ENCODE measurements at regions of chr4 and their contacts with region 1.

Region 1: DNA sequence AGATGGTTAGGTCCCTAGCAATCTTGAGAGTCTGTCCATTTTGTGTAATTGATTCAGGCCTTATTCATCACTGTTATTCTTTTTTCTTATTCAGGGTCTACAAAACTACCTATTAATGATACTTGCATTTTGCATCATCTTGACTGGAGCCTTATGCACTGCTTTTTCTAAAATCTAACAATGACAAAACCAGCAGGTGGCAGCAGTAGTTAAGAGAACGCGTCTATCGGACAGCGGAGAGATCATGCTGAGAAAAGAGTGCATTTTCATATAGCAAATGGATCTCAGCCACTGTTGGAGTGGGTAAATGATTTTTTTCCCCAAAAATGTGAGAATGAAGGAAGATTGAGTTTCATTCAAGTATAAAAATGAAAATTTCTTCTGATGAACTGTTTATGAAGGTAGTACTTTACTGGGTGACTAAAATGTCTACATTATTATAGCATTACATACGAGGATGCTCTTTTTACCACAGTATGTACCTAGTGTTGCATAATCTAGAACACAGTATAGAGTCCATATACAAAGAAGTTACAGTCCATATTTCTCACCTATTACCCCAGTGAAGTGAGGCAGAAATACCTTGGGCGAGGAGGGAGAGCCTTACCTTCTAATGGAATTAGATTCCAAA is 43.2 kb downstream of the TMEM144 start:
- DNase-seq: peak; percentile 18
- H3K4me3 ChIP-seq: no peak overlapping the region
- H3K27ac ChIP-seq: no peak overlapping the region
- H3K27me3 ChIP-seq: no peaks in the 10 kb centered on the region
- CTCF ChIP-seq: peak; percentile 73

Region 2: GRCh38 chr4:158051401-158052235 is 201.8 kb before region 1 on chr4:
- CTCF ChIA-PET with region 1: no interaction called
- POLR2A ChIA-PET with region 1: no interaction called
- DNase-seq: peak; percentile 63
- H3K4me3 ChIP-seq: no peak overlapping the region
- H3K27ac ChIP-seq: peak overlapping the region; percentile 34
- H3K27me3 ChIP-seq: no peaks in the 10 kb centered on the region
- CTCF ChIP-seq: no peak

Region 3: DNA sequence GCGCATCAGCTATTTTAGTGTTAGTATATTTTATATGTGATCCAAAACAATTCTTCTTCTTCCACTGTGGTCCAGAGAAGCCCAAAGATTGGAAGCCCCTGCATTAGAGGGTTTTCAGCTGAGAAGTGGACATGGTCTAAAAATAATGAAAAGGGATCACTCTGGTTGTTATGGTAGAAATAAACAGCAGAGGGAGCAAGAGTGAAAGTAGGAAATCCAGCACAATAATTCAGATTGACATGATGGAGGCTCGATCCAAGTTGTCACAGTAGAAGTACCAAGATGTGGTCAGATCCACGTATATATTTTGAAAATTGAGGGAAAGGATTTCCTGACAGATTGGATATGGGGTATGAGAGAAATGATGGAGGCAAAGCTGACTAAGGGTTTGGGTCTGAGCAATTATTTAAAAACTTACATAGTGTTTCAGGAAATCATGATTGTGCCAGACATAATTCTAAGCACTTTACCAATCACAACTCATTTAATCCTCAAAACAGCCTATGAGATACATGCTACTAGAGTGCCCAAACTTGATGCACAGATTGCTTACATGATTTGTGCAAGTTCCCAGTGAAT is 60.2 kb before region 1 on chr4:
- CTCF ChIA-PET with region 1: interaction called, 40 read pairs
- POLR2A ChIA-PET with region 1: no interaction called
- DNase-seq: no peak
- H3K4me3 ChIP-seq: no peak overlapping the region
- H3K27ac ChIP-seq: no peak overlapping the region
- H3K27me3 ChIP-seq: peaks cover 2% of the 10 kb centered on the region
- CTCF ChIP-seq: peak; percentile 62

Region 4: GRCh38 chr4:158213466-158213865 is 40.0 kb before region 1 on chr4:
- CTCF ChIA-PET with region 1: interaction called, 13 read pairs
- POLR2A ChIA-PET with region 1: no interaction called
- DNase-seq: no peak
- H3K4me3 ChIP-seq: no peak overlapping the region
- H3K27ac ChIP-seq: no peak overlapping the region
- H3K27me3 ChIP-seq: no peaks in the 10 kb centered on the region
- CTCF ChIP-seq: no peak

Region 5: GRCh38 chr4:158243071-158243470 is 10.4 kb before region 1 on chr4:
- CTCF ChIA-PET with region 1: interaction called, 11 read pairs
- POLR2A ChIA-PET with region 1: no interaction called
- DNase-seq: no peak
- H3K4me3 ChIP-seq: no peak overlapping the region
- H3K27ac ChIP-seq: no peak overlapping the region
- H3K27me3 ChIP-seq: no peaks in the 10 kb centered on the region
- CTCF ChIP-seq: no peak

Region 6: DNA sequence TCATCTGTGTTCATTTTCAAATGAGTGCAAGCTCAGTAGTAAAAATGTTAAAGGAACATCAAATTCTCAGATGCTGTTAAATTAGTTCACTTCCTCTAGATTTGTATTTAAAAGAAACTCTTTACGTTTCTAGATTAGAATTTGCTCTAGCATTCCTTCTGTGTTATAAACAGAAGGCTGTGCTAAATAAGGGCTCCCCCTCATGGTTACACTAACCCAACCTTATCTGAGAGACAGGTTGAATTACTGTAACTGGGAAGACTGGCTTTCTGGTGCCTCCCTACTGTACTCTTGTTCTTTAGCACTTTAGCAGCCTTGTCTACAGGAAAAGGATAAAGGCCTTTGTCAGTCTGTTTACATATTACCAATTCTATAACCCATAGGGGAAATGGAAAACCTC is 325.0 kb after region 1 on chr4:
- CTCF ChIA-PET with region 1: interaction called, 14 read pairs
- POLR2A ChIA-PET with region 1: no interaction called
- DNase-seq: no peak
- H3K4me3 ChIP-seq: no peak overlapping the region
- H3K27ac ChIP-seq: no peak overlapping the region
- H3K27me3 ChIP-seq: no peaks in the 10 kb centered on the region
- CTCF ChIP-seq: peak; percentile 58

Region 7: GRCh38 chr4:158624889-158625478 is 371.5 kb after region 1 on chr4:
- CTCF ChIA-PET with region 1: interaction called, 92 read pairs
- POLR2A ChIA-PET with region 1: no interaction called
- DNase-seq: peak; percentile 27
- H3K4me3 ChIP-seq: no peak overlapping the region
- H3K27ac ChIP-seq: no peak overlapping the region
- H3K27me3 ChIP-seq: no peaks in the 10 kb centered on the region
- CTCF ChIP-seq: peak; percentile 79